Heart left ventricle (tissue), 16 donors: ENCODE measurements at regions of chr2 and their contacts with region 1.

Region 1: DNA sequence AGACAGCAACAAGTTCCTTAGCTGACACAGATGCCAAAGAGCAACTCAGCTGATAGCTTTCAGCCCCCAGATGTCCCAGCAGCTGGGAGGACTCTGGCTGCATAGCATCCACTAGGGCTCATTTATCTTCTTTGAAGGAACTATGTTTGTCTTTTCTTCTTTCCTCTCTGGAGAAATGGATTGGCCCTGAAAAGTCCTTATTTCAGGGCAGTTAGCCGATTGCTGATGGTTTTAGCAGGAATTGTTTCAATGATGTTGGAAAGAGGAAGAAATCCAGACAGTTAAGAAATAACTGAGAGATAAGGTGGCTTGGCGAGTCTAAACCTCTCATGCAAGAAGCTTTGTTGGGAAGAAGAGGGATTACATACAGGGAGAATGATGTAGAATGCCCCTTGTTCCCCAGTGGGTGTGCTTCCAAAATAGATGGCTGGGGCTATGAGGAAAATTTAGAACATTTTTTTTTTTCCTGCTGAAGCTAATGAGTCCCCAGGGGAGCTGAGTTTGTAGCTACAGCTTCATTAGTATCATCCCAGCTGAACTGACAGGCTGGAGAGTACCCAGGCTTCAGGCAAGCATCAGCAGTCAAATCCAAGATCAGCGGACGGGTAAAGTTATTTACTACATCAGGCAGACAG is 33.6 kb upstream of the SERPINE2 start:
- DNase-seq: peak; percentile 57 to 74 (median 59)
- ATAC-seq: peak; percentile 71 to 91 (median 86)
- H3K4me3 ChIP-seq: no peak overlapping the region
- H3K27ac ChIP-seq: peak overlapping the region in 9 of 12 donors; percentile 19 to 77 (median 44)
- H3K4me1 ChIP-seq: peaks cover 0 to 29% (median 0%) of the 10 kb centered on the region in 12 donors
- H3K27me3 ChIP-seq: peaks cover 0 to 4% (median 0%) of the 10 kb centered on the region in 9 donors
- CTCF ChIP-seq: peak in 5 of 12 donors; percentile 23 to 39 (median 29)
- POLR2A ChIP-seq: no peak

Region 2: GRCh38 chr2:224025874-224026273 is 46.8 kb before region 1 on chr2:
- intact Hi-C with region 1: no loop called
- DNase-seq: no peak
- ATAC-seq: peak in 1 of 4 donors; percentile 37
- H3K4me3 ChIP-seq: no peak overlapping the region
- H3K27ac ChIP-seq: no peak overlapping the region
- H3K4me1 ChIP-seq: peaks cover 0 to 10% (median 0%) of the 10 kb centered on the region in 12 donors
- H3K27me3 ChIP-seq: peaks cover 0 to 7% (median 0%) of the 10 kb centered on the region in 9 donors
- CTCF ChIP-seq: no peak
- POLR2A ChIP-seq: no peak

Region 3: DNA sequence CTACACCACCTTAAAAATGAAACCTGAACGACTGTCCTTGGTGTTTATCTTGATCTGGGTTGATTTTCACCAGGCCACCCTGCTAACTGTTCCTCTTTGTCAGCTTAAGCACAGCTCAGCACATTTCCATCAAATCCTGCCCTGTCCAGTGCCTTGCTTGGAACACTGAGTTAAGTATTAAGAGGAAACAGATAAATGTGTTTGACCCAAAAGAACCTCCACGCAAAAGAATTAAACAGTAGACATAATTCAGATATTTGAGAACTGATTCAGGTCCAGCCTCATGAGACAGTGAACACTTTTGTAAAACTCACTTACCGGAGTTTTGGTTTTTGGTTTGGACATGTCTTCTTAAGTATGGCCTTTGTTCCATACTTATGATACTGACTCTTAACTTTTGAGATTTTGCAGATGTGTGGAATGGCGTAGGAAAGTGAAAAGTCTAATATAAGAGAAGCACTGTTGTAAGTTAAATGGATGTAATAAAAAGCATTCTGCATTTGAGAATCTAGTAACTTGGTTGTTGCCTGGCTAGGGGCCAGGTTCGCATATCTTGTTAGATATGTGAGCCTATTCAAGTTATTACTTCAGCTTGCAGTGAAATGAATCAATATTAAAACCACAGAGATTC is 55.3 kb after region 1 on chr2:
- intact Hi-C with region 1: loop called in 1 of 10 experiments (anchors 5 kb)
- DNase-seq: no peak
- ATAC-seq: peak in 1 of 4 donors; percentile 5
- H3K4me3 ChIP-seq: no peak overlapping the region
- H3K27ac ChIP-seq: peak overlapping the region in 5 of 12 donors; percentile 17 to 62 (median 34)
- H3K4me1 ChIP-seq: peaks cover 0 to 30% (median 5%) of the 10 kb centered on the region in 12 donors
- H3K27me3 ChIP-seq: no peaks in the 10 kb centered on the region
- CTCF ChIP-seq: no peak
- POLR2A ChIP-seq: no peak